Pancreas (tissue), 10 donors: ENCODE measurements at regions of chr19 and their contacts with region 1.

Region 1: GRCh38 chr19:10717356-10718204 is at the start of gene DNM2:
- DNase-seq: peak; percentile 97 to 100 (median 98)
- ATAC-seq: peak; percentile 86 to 92 (median 88)
- H3K4me3 ChIP-seq: peak within 1 kb of the TSS; percentile 68 to 100 (median 88)
- H3K27ac ChIP-seq: peak within 1 kb of the TSS; percentile 81 to 90 (median 88)
- H3K4me1 ChIP-seq: peaks cover 0 to 15% (median 8%) of the 10 kb centered on the region in 3 donors
- H3K27me3 ChIP-seq: no peaks in the 10 kb centered on the region
- CTCF ChIP-seq: peak; percentile 48 to 74 (median 64)
- total RNA-seq, gene DNM2: 52.5 to 94.8 (median 87.9) TPM

Region 2: GRCh38 chr19:10315335-10316214 is 402.0 kb before region 1 on chr19 and contains the start of gene FDX2:
- intact Hi-C with region 1: no loop called
- DNase-seq: peak; percentile 89 to 98 (median 94)
- ATAC-seq: peak; percentile 94 to 97 (median 96)
- H3K4me3 ChIP-seq: peak within 1 kb of the TSS; percentile 73 to 87 (median 81)
- H3K27ac ChIP-seq: peak within 1 kb of the TSS; percentile 15 to 39 (median 18)
- H3K4me1 ChIP-seq: peaks cover 0 to 9% (median 4%) of the 10 kb centered on the region in 3 donors
- H3K27me3 ChIP-seq: no peaks in the 10 kb centered on the region
- CTCF ChIP-seq: no peak
- total RNA-seq, gene FDX2: 5.5 to 10.9 (median 8.7) TPM

Region 3: DNA sequence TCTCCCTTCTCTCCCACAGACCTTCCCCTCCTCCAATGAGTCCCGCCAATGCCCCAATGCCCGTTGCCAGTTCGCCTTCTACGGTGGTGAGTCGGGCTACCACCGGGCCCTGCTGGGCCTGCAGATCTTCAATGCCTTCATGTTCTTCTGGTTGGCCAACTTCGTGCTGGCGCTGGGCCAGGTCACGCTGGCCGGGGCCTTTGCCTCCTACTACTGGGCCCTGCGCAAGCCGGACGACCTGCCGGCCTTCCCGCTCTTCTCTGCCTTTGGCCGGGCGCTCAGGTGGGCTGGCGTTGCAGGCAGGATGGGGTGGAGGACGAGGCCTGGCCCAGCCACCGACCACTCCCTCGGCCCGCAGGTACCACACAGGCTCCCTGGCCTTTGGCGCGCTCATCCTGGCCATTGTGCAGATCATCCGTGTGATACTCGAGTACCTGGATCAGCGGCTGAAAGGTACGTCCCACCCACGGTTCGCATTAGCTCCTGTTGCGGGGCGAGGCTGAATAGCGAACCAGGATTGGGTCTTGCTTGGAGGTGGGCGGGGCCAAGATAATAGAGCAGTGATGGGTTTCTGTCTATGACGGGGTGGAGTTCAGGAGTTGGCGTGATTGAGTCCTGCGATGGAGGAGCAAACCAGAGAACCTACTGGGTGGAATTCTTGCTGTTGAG is 81.1 kb before region 1 on chr19:
- intact Hi-C with region 1: no loop called
- DNase-seq: peak in 2 of 6 donors; percentile 44 to 77
- ATAC-seq: peak in 1 of 4 donors; percentile 35
- H3K4me3 ChIP-seq: no peak overlapping the region
- H3K27ac ChIP-seq: no peak overlapping the region
- H3K4me1 ChIP-seq: no peaks in the 10 kb centered on the region
- H3K27me3 ChIP-seq: no peaks in the 10 kb centered on the region
- CTCF ChIP-seq: no peak

Region 4: GRCh38 chr19:10780368-10780767 is 62.8 kb after region 1 on chr19:
- intact Hi-C with region 1: loop called in 2 of 3 experiments (anchors 5 to 10 kb)
- DNase-seq: peak in 1 of 6 donors; percentile 52
- ATAC-seq: peak in 3 of 4 donors; percentile 59 to 81 (median 67)
- H3K4me3 ChIP-seq: no peak overlapping the region
- H3K27ac ChIP-seq: peak overlapping the region in 2 of 4 donors; percentile 56 to 62
- H3K4me1 ChIP-seq: no peaks in the 10 kb centered on the region
- H3K27me3 ChIP-seq: no peaks in the 10 kb centered on the region
- CTCF ChIP-seq: no peak

Region 5: DNA sequence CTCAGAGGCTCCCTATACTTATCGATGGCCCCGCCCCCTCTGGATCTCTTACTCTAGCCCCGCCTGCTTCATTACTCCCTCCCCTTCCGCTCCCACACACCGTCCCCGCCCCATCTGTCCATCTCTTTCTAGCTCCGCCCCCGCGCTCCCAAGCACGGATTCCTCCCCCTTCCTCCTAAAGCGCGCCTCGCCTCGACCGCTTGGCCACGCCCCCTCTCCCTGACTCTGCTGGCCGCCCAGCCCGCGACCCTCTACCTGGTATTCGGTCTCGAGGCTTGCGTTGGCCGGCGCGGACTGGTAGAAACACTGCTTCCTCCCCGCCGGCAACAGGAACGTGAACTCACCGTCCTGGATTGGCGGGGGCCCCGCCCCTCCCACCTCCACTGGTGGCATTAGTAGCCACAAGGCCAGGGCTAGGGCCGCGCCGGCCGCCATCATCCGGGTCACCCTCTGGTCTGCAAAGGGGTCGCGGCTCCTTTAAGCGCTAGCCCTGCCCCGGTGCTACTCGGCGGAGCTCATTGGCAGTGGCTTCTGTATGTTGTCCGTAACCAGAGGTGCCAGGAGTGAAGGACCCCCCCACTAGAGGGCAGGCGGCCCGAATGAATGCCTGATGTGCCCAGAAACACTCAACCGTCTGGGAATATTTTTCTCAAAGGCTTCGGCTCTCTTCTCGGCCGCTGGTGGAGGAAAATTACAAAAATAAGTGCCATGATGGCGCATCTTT is 118.3 kb after region 1 on chr19 and contains the start of gene TMED1:
- intact Hi-C with region 1: loop called in 1 of 3 experiments (anchors 10 kb)
- DNase-seq: peak; percentile 96 to 100 (median 100)
- ATAC-seq: peak; percentile 83 to 91 (median 86)
- H3K4me3 ChIP-seq: peak within 1 kb of the TSS; percentile 33 to 72 (median 62)
- H3K27ac ChIP-seq: peak within 1 kb of the TSS; percentile 96 to 99 (median 98)
- H3K4me1 ChIP-seq: peaks cover 0 to 6% (median 3%) of the 10 kb centered on the region in 3 donors
- H3K27me3 ChIP-seq: no peaks in the 10 kb centered on the region
- CTCF ChIP-seq: no peak
- total RNA-seq, gene TMED1: 13.6 to 22.6 (median 18.7) TPM

Region 6: DNA sequence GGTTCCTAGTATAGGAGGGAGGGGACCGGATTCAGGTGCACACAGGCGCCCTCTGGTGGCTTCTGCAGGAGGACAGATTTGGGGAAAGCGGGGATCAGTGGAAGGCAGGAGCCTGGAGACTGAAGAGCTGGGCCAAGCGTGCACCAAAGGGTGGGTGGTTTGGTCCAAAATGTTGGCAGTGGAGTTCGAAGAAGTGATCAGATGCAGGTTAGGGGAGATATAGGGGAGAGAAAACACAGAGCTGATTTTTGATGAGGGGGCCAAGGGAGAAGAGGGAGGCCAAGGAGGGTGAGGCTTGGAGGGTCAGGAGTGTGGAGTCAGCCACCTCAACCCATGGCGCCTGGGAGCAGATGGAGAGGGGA is 146.9 kb after region 1 on chr19:
- intact Hi-C with region 1: loop called in 1 of 3 experiments (anchors 10 kb)
- DNase-seq: peak; percentile 81 to 94 (median 89)
- ATAC-seq: peak; percentile 86 to 91 (median 90)
- H3K4me3 ChIP-seq: no peak overlapping the region
- H3K27ac ChIP-seq: peak overlapping the region in 1 of 4 donors; percentile 13
- H3K4me1 ChIP-seq: peaks cover 0 to 6% (median 0%) of the 10 kb centered on the region in 3 donors
- H3K27me3 ChIP-seq: no peaks in the 10 kb centered on the region
- CTCF ChIP-seq: peak; percentile 80 to 85 (median 82)